CD4-positive, alpha-beta memory T cell (primary cell): ENCODE measurements at regions of chr14 and their contacts with region 1.

Region 1: DNA sequence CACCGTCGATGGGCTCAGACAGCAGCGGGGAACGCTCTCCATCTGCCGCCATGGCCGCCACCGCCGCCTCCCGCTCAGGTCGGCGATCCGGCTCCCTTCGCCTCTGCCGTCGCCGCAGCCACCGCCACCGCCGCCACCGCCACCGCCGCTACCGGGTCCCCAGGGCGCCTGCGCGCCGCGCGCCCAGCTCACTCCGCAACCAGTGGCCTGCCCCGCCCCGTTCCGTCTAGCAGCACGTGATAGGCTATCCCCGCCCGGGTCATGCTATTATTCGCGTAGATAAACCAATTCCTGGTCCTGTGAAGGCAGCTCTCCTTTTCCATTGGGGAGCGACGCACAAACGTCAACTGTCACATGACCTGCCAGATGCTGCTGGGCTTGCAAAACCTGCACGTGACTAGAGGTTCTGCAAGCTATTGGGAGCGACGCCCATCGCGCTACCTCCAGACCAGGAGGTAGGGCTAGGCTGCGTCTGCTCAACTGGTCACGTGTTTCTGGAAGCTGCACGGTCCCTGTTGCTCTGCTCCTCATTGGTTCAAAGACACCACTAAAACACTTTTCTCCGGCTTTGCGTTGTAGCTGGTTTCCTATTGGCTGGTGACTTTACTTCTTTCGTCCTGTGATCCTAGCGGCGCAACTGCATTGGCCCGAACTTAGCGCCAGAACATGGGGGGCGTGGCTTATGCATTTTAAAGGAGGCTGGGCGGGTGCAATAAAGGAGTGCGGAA is at the start of gene PIP4P1:
- DNase-seq: peak; percentile 98 to 100 (median 99)
- H3K4me3 ChIP-seq: peak within 1 kb of the TSS; percentile 64 to 76
- H3K4me3 Mint-ChIP-seq: peak within 1 kb of the TSS; percentile 89 to 96 (median 92)
- H3K27ac ChIP-seq: peak within 1 kb of the TSS; percentile 86
- H3K27ac Mint-ChIP-seq: peak within 1 kb of the TSS; percentile 92 to 99 (median 97)
- H3K4me1 ChIP-seq: peaks cover 39% of the 10 kb centered on the region
- H3K4me1 Mint-ChIP-seq: peaks cover 19 to 35% (median 23%) of the 10 kb centered on the region in 4 donors
- H3K27me3 ChIP-seq: no peaks in the 10 kb centered on the region
- H3K27me3 Mint-ChIP-seq: no peaks in the 10 kb centered on the region
- total RNA-seq, gene PIP4P1: 77.8 to 78.1 TPM

Region 2: GRCh38 chr14:20332788-20333493 is 128.5 kb before region 1 on chr14 and contains the start of gene CCNB1IP1:
- CTCF ChIA-PET with region 1: interaction called, 16 read pairs
- POLR2A ChIA-PET with region 1: interaction called, 10 read pairs
- intact Hi-C with region 1: loop called (anchors 2 kb)
- DNase-seq: peak; percentile 73 to 84 (median 73)
- H3K4me3 ChIP-seq: peak within 1 kb of the TSS; percentile 62 to 67
- H3K4me3 Mint-ChIP-seq: peak within 1 kb of the TSS; percentile 99 to 100 (median 99)
- H3K27ac ChIP-seq: peak within 1 kb of the TSS; percentile 67
- H3K27ac Mint-ChIP-seq: peak within 1 kb of the TSS; percentile 86 to 98 (median 98)
- H3K4me1 ChIP-seq: peaks cover 16% of the 10 kb centered on the region
- H3K4me1 Mint-ChIP-seq: peaks cover 20 to 41% (median 24%) of the 10 kb centered on the region in 4 donors
- H3K27me3 ChIP-seq: no peaks in the 10 kb centered on the region
- H3K27me3 Mint-ChIP-seq: no peaks in the 10 kb centered on the region
- total RNA-seq, gene CCNB1IP1: 21.2 to 24.3 TPM

Region 3: DNA sequence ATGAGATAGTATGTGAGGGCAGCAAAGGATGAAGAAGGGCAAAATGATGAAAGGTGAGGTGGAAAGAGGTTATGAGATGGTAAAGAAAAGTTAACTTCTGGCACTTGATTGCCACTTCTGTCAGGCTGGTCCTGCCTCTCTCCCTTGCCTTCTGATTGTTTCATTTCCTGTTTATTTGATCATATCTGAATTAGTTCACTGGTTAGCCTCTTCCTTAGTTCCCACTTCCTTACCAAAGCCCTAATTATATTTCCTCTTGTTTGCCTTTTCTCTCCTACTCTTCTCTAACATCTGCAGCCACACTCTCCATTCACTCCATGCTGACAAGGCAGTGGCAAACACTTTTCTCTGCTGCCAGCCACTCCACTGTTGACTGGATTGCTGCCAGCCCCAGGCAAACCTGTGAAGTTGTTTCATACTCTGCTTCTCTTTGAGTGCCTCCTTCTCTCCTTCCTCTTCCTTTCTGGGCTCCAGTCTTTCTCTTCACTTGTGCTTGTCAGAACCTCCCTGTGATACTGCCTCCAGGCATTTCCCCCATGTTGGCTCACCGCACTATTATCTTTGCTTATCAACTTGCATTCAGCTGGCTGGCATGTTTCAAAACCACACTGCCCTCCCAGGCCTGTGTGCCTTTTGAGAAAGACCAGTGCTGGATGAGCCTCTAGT is 15.9 kb after region 1 on chr14:
- CTCF ChIA-PET with region 1: interaction called, 5 read pairs
- POLR2A ChIA-PET with region 1: interaction called, 119 read pairs
- intact Hi-C with region 1: loop called (anchors 1 kb)
- DNase-seq: peak; percentile 55 to 67 (median 62)
- H3K4me3 ChIP-seq: peak overlapping the region in 1 of 2 donors; percentile 42
- H3K4me3 Mint-ChIP-seq: peak overlapping the region; percentile 66 to 87 (median 80)
- H3K27ac ChIP-seq: peak overlapping the region; percentile 51
- H3K27ac Mint-ChIP-seq: peak overlapping the region; percentile 84 to 97 (median 90)
- H3K4me1 ChIP-seq: peaks cover 98% of the 10 kb centered on the region
- H3K4me1 Mint-ChIP-seq: peaks cover 57 to 94% (median 76%) of the 10 kb centered on the region in 4 donors
- H3K27me3 ChIP-seq: no peaks in the 10 kb centered on the region
- H3K27me3 Mint-ChIP-seq: no peaks in the 10 kb centered on the region

Region 4: DNA sequence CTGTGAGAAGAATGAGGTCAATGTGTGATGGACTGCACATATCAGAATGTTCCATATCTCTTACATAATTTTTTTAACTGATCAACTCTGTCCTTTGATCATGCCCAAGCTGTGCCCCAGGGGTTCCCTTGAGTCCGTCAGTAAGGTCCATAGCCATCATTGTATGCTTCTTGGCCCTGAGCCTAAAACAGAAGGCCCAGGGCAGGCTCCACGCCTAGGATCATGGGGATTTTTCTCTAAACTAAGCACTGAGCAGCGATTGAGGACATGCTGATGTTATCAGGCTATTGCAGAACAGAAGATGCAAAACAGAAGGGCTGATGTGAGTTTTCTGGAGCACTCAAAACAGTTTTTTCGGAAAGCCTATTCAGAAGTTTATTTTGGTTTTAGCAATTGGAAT is 78.5 kb after region 1 on chr14:
- CTCF ChIA-PET with region 1: no interaction called
- POLR2A ChIA-PET with region 1: no interaction called
- intact Hi-C with region 1: no loop called
- DNase-seq: no peak
- H3K4me3 ChIP-seq: no peak overlapping the region
- H3K4me3 Mint-ChIP-seq: no peak overlapping the region
- H3K27ac ChIP-seq: no peak overlapping the region
- H3K27ac Mint-ChIP-seq: no peak overlapping the region
- H3K4me1 ChIP-seq: no peaks in the 10 kb centered on the region
- H3K4me1 Mint-ChIP-seq: no peaks in the 10 kb centered on the region
- H3K27me3 ChIP-seq: no peaks in the 10 kb centered on the region
- H3K27me3 Mint-ChIP-seq: peaks cover 7 to 16% of the 10 kb centered on the region in 2 donors